ENCODE measurements at regions of chr12 and their contacts with region 1.

Region 1: GRCh38 chr12:1605129-1606020 is 11.0 kb upstream of the FBXL14 start:
- DNase-seq: peak; percentile 89
- H3K4me3 ChIP-seq: peak overlapping the region; percentile 33
- H3K4me3 Mint-ChIP-seq: peak overlapping the region; percentile 74
- H3K27ac Mint-ChIP-seq: peak overlapping the region; percentile 85
- H3K4me1 ChIP-seq: peaks cover 9% of the 10 kb centered on the region
- H3K4me1 Mint-ChIP-seq: peaks cover 11% of the 10 kb centered on the region
- H3K27me3 ChIP-seq: no peaks in the 10 kb centered on the region
- H3K27me3 Mint-ChIP-seq: no peaks in the 10 kb centered on the region
- CTCF ChIP-seq: peak; percentile 90 to 93

Region 2: GRCh38 chr12:1517007-1517406 is 88.4 kb before region 1 on chr12:
- CTCF ChIA-PET with region 1: no interaction called
- POLR2A ChIA-PET with region 1: no interaction called
- intact Hi-C with region 1: loop called (anchors 1 kb)
- DNase-seq: peak in 1 of 2 experiments; percentile 58
- H3K4me3 ChIP-seq: no peak overlapping the region
- H3K4me3 Mint-ChIP-seq: no peak overlapping the region
- H3K27ac Mint-ChIP-seq: no peak overlapping the region
- H3K4me1 ChIP-seq: peaks cover 15% of the 10 kb centered on the region
- H3K4me1 Mint-ChIP-seq: peaks cover 12% of the 10 kb centered on the region
- H3K27me3 ChIP-seq: no peaks in the 10 kb centered on the region; the same call in 1 of the 2 replicates
- H3K27me3 Mint-ChIP-seq: peaks cover 6% of the 10 kb centered on the region
- CTCF ChIP-seq: peak; percentile 71 to 83

Region 3: DNA sequence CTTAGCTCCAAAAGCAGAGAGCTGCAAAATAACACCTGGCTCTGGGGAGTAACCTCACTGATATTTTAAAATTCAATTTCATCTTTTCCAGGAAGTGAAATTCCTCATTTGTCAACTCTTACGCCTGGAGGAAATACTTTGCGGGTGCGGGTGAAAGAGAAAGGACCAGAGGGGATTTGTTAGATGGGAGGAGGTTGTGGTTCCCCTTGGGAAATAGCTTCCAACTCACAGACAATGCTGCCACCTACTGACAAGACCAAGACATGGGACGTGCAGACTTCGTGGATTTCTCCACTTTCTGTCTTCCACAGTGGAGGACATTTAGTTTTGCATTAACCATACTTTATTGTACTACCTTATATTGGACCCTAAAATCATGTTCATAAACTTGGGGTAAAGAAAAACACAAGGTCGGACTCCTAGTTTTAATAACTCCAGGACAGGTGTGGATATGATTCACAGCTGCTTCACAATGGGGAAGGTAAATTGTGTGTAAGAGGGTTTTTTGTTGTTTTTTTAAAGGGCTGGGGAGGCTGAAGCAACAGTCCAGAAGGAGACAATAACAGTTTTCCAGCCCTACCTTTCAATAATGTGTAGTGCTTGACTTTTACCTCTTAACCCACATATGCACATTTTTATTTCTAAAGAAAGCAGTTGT is 21.8 kb before region 1 on chr12:
- CTCF ChIA-PET with region 1: interaction called, 15 read pairs
- POLR2A ChIA-PET with region 1: no interaction called
- intact Hi-C with region 1: no loop called
- DNase-seq: peak; percentile 82 to 87
- H3K4me3 ChIP-seq: no peak overlapping the region
- H3K4me3 Mint-ChIP-seq: no peak overlapping the region
- H3K27ac Mint-ChIP-seq: no peak overlapping the region
- H3K4me1 ChIP-seq: no peaks in the 10 kb centered on the region
- H3K4me1 Mint-ChIP-seq: peaks cover 3% of the 10 kb centered on the region
- H3K27me3 ChIP-seq: no peaks in the 10 kb centered on the region
- H3K27me3 Mint-ChIP-seq: no peaks in the 10 kb centered on the region
- CTCF ChIP-seq: peak; percentile 88 to 99

Region 4: GRCh38 chr12:1594261-1595025 is 10.9 kb before region 1 on chr12 and contains the start of gene FBXL14:
- CTCF ChIA-PET with region 1: interaction called, 8 read pairs
- POLR2A ChIA-PET with region 1: interaction called, 6 read pairs
- intact Hi-C with region 1: loop called (anchors 1 kb)
- DNase-seq: peak; percentile 96 to 99
- H3K4me3 ChIP-seq: peak within 1 kb of the TSS; percentile 51
- H3K4me3 Mint-ChIP-seq: peak within 1 kb of the TSS; percentile 89
- H3K27ac Mint-ChIP-seq: peak within 1 kb of the TSS; percentile 91
- H3K4me1 ChIP-seq: peaks cover 34% of the 10 kb centered on the region
- H3K4me1 Mint-ChIP-seq: peaks cover 37% of the 10 kb centered on the region
- H3K27me3 ChIP-seq: no peaks in the 10 kb centered on the region
- H3K27me3 Mint-ChIP-seq: no peaks in the 10 kb centered on the region
- CTCF ChIP-seq: no peak
- total RNA-seq, gene FBXL14: 23.6 and 25.5 TPM in 2 replicates

Region 5: DNA sequence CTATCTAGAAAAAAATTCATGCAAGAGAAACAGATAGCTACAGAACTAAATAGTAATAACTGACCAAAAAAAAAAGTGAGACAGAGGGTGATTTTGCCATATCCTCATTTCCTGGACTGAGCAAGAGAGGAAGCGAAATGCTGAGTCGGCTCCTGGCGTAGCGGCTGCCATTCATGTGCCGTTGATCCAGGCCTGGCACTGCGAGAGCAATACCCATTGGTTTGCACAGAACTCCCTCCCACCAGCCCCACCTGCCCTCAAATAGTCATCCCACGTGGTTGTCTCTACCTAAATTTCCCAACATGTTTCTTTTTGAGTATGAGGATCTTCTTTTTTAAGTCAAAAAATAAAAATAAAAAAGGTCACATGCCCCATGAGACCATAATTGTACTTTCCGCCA is 14.2 kb after region 1 on chr12:
- CTCF ChIA-PET with region 1: interaction called, 16 read pairs
- POLR2A ChIA-PET with region 1: no interaction called
- intact Hi-C with region 1: no loop called
- DNase-seq: no peak
- H3K4me3 ChIP-seq: no peak overlapping the region
- H3K4me3 Mint-ChIP-seq: no peak overlapping the region
- H3K27ac Mint-ChIP-seq: no peak overlapping the region
- H3K4me1 ChIP-seq: 0 out of 2 replicates have a peak, but pooled peaks cover 6% of the 10 kb centered on the region
- H3K4me1 Mint-ChIP-seq: peaks cover 8% of the 10 kb centered on the region
- H3K27me3 ChIP-seq: no peaks in the 10 kb centered on the region
- H3K27me3 Mint-ChIP-seq: no peaks in the 10 kb centered on the region
- CTCF ChIP-seq: no peak

Region 6: GRCh38 chr12:1629338-1630132 is 24.2 kb after region 1 on chr12:
- CTCF ChIA-PET with region 1: interaction called, 14 read pairs
- POLR2A ChIA-PET with region 1: no interaction called
- intact Hi-C with region 1: loop called (anchors 1 kb)
- DNase-seq: peak; percentile 65 to 67
- H3K4me3 ChIP-seq: peak overlapping the region; percentile 38
- H3K4me3 Mint-ChIP-seq: peak overlapping the region; percentile 97
- H3K27ac Mint-ChIP-seq: peak overlapping the region; percentile 80
- H3K4me1 ChIP-seq: peaks cover 23% of the 10 kb centered on the region
- H3K4me1 Mint-ChIP-seq: peaks cover 31% of the 10 kb centered on the region
- H3K27me3 ChIP-seq: no peaks in the 10 kb centered on the region
- H3K27me3 Mint-ChIP-seq: no peaks in the 10 kb centered on the region
- CTCF ChIP-seq: peak; percentile 50 to 61

Region 7: DNA sequence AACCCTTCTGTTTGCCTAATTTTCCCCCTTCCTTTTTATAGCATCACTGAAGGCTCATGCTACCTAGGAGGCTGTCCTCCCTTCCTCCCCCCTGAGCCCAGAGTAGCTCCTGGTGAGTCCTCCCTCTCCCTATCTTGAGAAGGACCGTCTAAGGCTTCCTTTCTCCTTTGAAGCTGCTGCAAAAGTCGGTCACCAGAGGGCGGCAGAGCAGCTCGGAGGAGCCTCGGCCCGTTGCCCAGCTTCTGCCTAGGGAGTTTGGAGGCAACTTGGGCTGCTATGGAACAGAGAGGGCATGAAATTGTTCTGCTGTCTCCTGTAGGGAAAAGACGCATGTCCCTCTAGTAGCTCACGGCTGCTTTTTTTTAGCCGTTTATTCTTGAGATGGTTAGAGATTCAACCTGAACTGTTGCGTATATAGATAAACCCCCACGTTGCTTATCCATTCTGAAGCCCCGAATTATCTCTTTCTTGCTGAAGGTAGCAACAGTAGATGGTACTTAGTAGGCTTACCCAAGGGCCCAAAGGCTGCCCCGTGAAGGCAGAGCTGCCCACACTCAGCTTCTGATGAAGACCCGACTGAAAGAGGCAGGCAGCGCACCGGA is 29.3 kb after region 1 on chr12:
- CTCF ChIA-PET with region 1: interaction called, 14 read pairs
- POLR2A ChIA-PET with region 1: no interaction called
- intact Hi-C with region 1: loop called (anchors 1 kb)
- DNase-seq: peak; percentile 79 to 87
- H3K4me3 ChIP-seq: no peak overlapping the region
- H3K4me3 Mint-ChIP-seq: no peak overlapping the region
- H3K27ac Mint-ChIP-seq: no peak overlapping the region
- H3K4me1 ChIP-seq: peaks cover 17% of the 10 kb centered on the region
- H3K4me1 Mint-ChIP-seq: peaks cover 16% of the 10 kb centered on the region
- H3K27me3 ChIP-seq: no peaks in the 10 kb centered on the region
- H3K27me3 Mint-ChIP-seq: no peaks in the 10 kb centered on the region
- CTCF ChIP-seq: peak; percentile 93 to 96

Region 8: DNA sequence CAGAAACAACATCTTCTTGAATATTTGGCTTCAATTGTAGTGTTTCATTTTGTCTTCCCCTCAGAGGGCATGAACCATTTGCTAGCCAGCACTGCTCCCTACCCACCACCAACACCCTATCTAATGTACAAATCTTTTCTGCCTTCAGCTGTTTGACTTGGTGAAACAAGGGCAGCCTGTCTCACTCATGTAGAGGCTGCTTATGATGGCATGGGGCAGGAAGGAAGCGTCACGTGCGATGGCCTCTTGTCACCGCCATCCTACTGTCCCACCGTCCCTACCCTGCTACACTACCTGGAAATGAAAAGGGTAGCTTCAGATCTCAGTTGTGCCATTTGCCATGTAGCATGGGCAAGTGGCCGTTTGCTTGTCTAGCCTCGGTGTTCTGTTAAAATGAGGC is 185.1 kb after region 1 on chr12:
- CTCF ChIA-PET with region 1: no interaction called
- POLR2A ChIA-PET with region 1: no interaction called
- intact Hi-C with region 1: no loop called
- DNase-seq: no peak
- H3K4me3 ChIP-seq: no peak overlapping the region
- H3K4me3 Mint-ChIP-seq: no peak overlapping the region
- H3K27ac Mint-ChIP-seq: peak overlapping the region; percentile 3
- H3K4me1 ChIP-seq: no peaks in the 10 kb centered on the region
- H3K4me1 Mint-ChIP-seq: peaks cover 1% of the 10 kb centered on the region
- H3K27me3 ChIP-seq: no peaks in the 10 kb centered on the region
- H3K27me3 Mint-ChIP-seq: no peaks in the 10 kb centered on the region
- CTCF ChIP-seq: no peak

Measured in Caco-2 (cell line).